Activated naive CD4-positive, alpha-beta T cell treated with anti-CD3 and anti-CD28 coated beads for 36 hours (primary cell): ENCODE measurements at regions of chr6 and their contacts with region 1.

Region 1: GRCh38 chr6:3456755-3457466 is at the start of gene SLC22A23:
- DNase-seq: peak; percentile 76
- H3K4me3 Mint-ChIP-seq: peak within 1 kb of the TSS; percentile 74
- H3K27ac Mint-ChIP-seq: no peak within 1 kb of the TSS
- H3K4me1 Mint-ChIP-seq: peaks cover 10% of the 10 kb centered on the region
- H3K27me3 Mint-ChIP-seq: peaks cover 8% of the 10 kb centered on the region
- total RNA-seq, gene SLC22A23: 1.3 to 1.4 TPM

Region 2: DNA sequence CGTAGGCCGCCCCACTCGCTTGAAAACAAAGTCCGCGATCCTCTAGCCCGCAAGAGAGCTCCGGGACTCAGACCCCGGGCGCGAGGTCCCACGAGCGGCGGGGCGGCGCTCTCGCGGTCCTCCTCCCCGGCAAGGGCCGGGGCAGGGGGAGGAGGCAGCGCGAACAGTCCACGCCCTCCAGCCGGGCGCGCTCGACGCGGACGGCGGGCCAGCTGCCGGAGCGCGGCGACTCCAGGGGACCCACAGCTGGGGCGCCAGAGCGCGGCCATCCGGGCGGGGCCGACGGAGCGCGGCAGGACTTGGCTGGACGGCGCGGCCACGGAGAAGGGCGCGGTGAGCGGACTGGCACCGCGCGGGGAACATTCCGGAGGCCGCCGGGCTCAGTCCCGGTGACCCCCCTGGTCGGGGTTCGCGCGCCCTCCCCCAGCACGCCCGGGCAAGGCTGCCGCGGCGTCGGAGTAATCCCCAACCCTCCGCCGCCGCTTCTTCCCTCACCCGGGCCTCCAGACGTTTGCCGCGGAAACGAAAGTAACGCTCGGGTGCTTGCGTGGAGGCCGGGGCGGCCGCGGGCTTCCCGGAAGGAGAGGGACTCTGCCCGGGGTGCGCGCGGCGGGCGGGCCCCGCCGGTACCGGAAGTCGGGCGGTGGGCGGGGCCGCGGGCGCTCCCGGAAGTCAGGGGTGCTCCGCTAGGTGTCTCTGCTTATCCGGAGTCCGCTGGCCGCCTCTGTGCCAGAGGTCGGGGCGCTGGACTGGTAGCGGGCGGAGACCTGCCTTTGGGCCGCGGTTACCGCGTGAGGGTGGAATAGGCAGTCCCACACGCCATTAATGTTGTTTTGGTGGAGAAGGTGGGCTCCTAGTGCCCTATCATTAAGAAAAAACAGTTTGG is 388.3 kb before region 1 on chr6 and contains the start of gene RIPK1:
- CTCF ChIA-PET with region 1: no interaction called
- intact Hi-C with region 1: loop called (anchors 5 kb)
- DNase-seq: peak; percentile 95
- H3K4me3 Mint-ChIP-seq: peak within 1 kb of the TSS; percentile 92
- H3K27ac Mint-ChIP-seq: peak within 1 kb of the TSS; percentile 97
- H3K4me1 Mint-ChIP-seq: peaks cover 49% of the 10 kb centered on the region
- H3K27me3 Mint-ChIP-seq: no peaks in the 10 kb centered on the region
- total RNA-seq, gene RIPK1: 8.8 to 10.1 TPM

Region 3: DNA sequence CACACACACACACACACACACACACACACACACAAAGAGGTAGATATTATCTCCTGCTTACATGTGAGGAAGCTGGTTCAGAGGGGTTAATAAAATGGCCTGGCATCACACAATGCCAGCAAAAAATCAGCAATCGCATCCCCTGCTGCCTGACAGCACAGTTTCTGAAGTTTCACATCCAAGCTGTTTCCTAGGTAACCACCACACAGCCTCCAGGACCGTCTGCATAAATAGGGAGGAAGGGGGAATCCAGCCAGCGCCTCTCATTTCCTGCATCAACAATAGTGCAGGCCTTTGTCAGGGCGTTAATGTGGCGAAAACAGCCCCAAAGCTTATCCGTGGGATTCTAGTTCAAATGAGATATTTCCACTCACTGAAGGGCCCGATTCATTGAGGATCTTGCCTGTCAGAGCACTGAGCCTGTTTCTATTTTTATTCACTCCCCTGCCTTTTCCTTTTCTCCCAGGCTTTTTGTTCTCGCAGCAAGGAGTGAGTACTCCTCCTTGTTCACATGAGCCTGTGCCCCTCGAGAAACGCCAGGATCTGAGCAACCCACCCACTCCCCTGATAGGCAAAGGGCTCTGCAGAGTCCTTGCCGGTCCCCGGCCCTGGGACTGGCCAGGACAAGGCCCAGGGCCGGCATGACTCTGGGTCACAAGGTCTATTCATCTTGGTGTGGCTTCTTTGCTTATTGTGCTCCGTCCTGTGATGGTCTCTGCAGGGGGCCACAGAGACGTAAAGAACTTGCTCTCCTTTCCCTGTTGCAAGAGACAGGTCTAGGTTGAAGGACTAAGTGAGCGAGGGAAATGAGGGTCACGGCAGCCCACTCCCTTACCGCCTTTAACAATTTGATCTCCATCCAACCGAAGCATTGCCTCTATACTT is 262.1 kb before region 1 on chr6:
- CTCF ChIA-PET with region 1: no interaction called
- intact Hi-C with region 1: no loop called
- DNase-seq: peak; percentile 62
- H3K4me3 Mint-ChIP-seq: no peak overlapping the region
- H3K27ac Mint-ChIP-seq: no peak overlapping the region
- H3K4me1 Mint-ChIP-seq: no peaks in the 10 kb centered on the region
- H3K27me3 Mint-ChIP-seq: peaks cover 2% of the 10 kb centered on the region

Region 4: DNA sequence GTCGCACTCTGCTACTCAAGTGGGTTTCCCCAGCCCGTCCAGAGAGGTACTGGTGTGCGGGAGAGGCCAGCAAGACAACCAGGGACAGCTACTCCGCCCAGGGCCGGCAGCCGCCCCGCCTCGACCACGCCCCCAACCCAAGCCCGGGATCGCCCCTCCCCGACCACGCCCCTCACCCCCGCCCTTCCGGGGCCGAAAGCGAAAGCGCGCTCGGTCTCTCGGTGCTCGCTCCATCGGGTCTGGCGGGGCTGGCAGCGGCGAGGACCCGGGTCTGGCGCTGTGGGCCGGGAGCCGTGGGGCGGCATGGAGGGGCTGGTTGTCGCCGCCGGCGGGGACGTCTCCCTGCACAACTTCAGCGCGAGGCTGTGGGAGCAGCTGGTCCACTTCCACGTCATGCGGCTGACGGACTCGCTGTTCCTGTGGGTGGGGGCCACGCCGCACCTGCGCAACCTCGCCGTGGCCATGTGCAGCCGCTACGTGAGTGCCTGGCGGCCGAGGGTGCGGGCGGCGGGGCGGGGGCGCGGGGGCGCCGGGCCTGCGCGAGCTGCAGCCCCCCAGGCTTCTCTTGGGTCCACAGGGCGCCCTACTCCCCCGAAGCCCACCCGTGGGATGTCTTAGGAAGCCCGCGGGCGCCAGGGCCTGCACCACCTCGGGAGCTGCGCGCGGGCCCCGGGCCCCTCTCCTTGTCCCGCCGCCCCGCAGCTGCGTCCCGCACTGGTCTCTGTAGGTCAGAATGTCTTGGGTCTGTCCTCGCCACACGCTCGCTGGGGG is 198.0 kb before region 1 on chr6 and contains the start of gene PSMG4:
- CTCF ChIA-PET with region 1: no interaction called
- intact Hi-C with region 1: loop called (anchors 1 kb)
- DNase-seq: peak; percentile 94
- H3K4me3 Mint-ChIP-seq: peak within 1 kb of the TSS; percentile 94
- H3K27ac Mint-ChIP-seq: peak within 1 kb of the TSS; percentile 87
- H3K4me1 Mint-ChIP-seq: peaks cover 35% of the 10 kb centered on the region
- H3K27me3 Mint-ChIP-seq: no peaks in the 10 kb centered on the region
- total RNA-seq, gene PSMG4: 23.9 to 26.2 TPM

Region 5: GRCh38 chr6:3272911-3273547 is 183.9 kb before region 1 on chr6:
- CTCF ChIA-PET with region 1: no interaction called
- intact Hi-C with region 1: no loop called
- DNase-seq: no peak
- H3K4me3 Mint-ChIP-seq: no peak overlapping the region
- H3K27ac Mint-ChIP-seq: no peak overlapping the region
- H3K4me1 Mint-ChIP-seq: peaks cover 21% of the 10 kb centered on the region
- H3K27me3 Mint-ChIP-seq: no peaks in the 10 kb centered on the region

Region 6: DNA sequence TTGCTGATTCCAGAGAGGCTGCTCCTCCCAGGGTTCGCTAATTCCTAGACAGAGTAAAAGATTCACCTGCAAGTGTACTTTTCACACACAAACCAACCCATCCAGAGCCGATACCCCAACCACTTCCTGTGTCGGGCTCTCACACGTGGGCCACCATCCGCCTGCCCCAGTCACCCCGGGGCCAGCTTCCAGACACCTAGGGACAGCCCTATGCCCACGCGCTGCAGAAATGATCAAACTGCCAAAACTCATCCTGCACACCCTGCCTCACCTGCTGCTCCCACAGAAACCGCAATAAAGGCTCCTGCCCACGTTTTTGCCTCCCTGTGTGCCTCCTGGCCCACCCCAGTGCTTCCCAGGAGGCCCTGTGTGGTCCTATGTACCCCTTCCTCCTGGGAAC is 138.7 kb before region 1 on chr6:
- CTCF ChIA-PET with region 1: no interaction called
- intact Hi-C with region 1: loop called (anchors 5 kb)
- DNase-seq: peak; percentile 80
- H3K4me3 Mint-ChIP-seq: no peak overlapping the region
- H3K27ac Mint-ChIP-seq: no peak overlapping the region
- H3K4me1 Mint-ChIP-seq: peaks cover 25% of the 10 kb centered on the region
- H3K27me3 Mint-ChIP-seq: no peaks in the 10 kb centered on the region

Region 7: GRCh38 chr6:3410385-3411360 is 46.2 kb before region 1 on chr6:
- CTCF ChIA-PET with region 1: interaction called, 6 read pairs
- intact Hi-C with region 1: loop called (anchors 1 kb)
- DNase-seq: peak; percentile 82
- H3K4me3 Mint-ChIP-seq: no peak overlapping the region
- H3K27ac Mint-ChIP-seq: no peak overlapping the region
- H3K4me1 Mint-ChIP-seq: peaks cover 21% of the 10 kb centered on the region
- H3K27me3 Mint-ChIP-seq: no peaks in the 10 kb centered on the region

Region 8: DNA sequence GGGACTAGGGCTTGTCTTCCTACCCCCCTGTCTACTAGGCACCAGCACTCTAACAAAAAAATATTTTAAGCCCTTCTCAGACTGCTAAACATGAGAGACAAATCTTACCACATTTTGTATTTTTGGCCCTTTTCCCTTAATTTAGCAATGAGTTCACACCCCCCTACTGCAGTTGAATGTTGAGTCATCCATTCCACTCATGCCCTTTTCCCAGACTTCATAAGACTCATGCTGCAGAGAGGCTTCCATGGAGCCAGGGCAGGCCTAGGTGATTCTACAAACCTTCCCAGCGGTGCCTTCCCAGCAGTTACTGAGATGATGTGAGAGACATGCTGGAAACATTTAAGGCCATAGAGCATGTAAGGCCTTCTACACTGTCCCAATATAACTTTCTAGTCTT is 240.7 kb after region 1 on chr6:
- CTCF ChIA-PET with region 1: no interaction called
- intact Hi-C with region 1: no loop called
- DNase-seq: no peak
- H3K4me3 Mint-ChIP-seq: no peak overlapping the region
- H3K27ac Mint-ChIP-seq: no peak overlapping the region
- H3K4me1 Mint-ChIP-seq: no peaks in the 10 kb centered on the region
- H3K27me3 Mint-ChIP-seq: peaks cover 7% of the 10 kb centered on the region

Region 9: DNA sequence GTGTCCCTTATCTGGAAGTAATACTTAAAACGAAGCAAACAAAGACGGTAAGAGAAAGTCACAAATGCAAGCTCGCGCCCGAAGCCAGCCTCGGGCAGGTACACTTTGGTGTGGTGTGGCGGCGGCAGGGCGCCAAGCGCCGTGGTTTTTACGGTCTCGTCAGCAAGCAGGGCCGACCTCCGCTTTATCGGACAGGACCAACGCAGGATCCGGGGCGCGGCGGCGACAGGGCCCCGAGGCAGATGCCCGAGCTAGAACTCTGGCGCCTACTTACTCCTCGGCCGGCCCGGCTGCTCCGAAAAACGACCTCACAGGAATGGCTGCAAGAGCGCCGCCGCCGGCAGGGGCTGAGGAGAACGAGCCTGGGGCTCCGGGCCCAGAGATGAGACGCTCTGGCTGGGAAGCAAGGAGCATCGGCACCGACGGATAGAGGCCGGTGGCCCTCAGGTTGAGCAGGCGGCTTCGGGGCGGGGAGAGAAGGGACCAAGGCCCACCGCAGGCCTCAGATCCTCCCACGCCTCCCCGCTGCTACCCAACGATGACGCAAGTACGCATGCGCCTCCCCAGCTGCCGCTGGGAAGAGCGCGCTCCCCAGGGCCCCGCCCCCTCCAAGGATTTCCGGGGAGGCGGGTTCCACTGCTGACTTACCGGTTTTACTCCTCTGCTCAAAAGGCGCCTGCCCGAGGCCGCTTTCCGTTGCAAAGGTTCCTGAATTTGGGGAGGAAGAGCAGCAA is 561.4 kb after region 1 on chr6:
- CTCF ChIA-PET with region 1: no interaction called
- intact Hi-C with region 1: loop called (anchors 5 kb)
- DNase-seq: peak; percentile 97
- H3K4me3 Mint-ChIP-seq: peak overlapping the region; percentile 82
- H3K27ac Mint-ChIP-seq: peak overlapping the region; percentile 92
- H3K4me1 Mint-ChIP-seq: peaks cover 57% of the 10 kb centered on the region
- H3K27me3 Mint-ChIP-seq: no peaks in the 10 kb centered on the region